ENCODE measurements at regions of chr2 and their contacts with region 1.

Region 1: DNA sequence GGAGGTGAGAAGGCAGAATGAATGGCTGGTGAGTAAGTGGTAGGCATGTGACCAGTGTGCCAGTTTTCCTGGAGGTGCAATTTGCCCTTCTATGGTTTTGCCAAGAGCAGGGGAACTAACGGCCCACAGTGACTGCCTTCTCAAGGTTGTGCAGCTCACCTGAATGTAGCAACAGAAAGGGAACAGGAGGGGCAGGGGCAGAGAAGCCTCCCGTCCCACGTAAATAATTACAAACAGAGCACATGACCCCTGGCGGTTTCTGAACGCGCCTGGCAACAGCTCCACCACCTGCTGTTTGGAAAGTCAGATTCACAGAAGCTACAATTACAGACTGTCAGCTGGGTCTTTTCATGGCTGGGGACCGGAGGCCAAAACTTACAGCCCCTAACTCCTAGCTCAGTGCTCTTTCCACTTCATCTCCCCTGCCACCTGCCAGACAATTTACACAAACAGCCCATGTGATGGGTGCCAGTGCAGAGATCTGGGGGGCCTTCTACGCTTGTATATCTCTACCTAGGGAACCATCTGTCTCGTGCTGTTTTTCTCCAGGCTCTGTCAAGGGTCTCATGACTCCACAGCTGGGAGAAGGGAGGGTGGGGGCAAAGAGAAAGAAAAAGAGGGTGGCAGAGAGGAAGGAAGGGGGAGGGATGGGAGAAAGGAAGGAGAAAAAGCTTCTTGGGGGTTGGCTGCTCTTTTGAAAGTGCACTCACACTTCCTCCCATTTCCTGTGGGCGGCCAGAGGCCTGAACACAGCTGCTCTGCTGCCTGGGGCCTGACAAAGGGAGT is 69.6 kb downstream of the POLR1A start:
- DNase-seq: peak; percentile 86
- ATAC-seq: peak; percentile 83
- H3K4me3 ChIP-seq: no peak overlapping the region
- H3K27ac ChIP-seq: peak overlapping the region; percentile 83
- H3K4me1 ChIP-seq: peaks cover 29% of the 10 kb centered on the region
- H3K27me3 ChIP-seq: no peaks in the 10 kb centered on the region
- CTCF ChIP-seq: peak; percentile 36
- POLR2A ChIP-seq: no peak
- RAD21 ChIP-seq: peak; percentile 45

Region 2: GRCh38 chr2:85826990-85827878 is 208.8 kb before region 1 on chr2:
- CTCF ChIA-PET with region 1: interaction called, 4 read pairs
- POLR2A ChIA-PET with region 1: interaction called, 10 read pairs
- dilution Hi-C with region 1: no loop called
- in situ Hi-C with region 1: no loop called
- intact Hi-C with region 1: loop called (anchors 2 kb)
- DNase-seq: peak; percentile 49
- ATAC-seq: peak; percentile 100
- H3K4me3 ChIP-seq: no peak overlapping the region
- H3K27ac ChIP-seq: no peak overlapping the region
- H3K4me1 ChIP-seq: no peaks in the 10 kb centered on the region
- H3K27me3 ChIP-seq: peaks cover 9% of the 10 kb centered on the region
- CTCF ChIP-seq: peak; percentile 92
- POLR2A ChIP-seq: 0 out of 2 replicates have a peak, but pooled peaks have one; percentile 36
- RAD21 ChIP-seq: peak; percentile 94

Region 3: GRCh38 chr2:85924522-85924921 is 111.6 kb before region 1 on chr2:
- CTCF ChIA-PET with region 1: no interaction called
- POLR2A ChIA-PET with region 1: no interaction called
- dilution Hi-C with region 1: no loop called
- in situ Hi-C with region 1: no loop called
- intact Hi-C with region 1: loop called (anchors 5 kb)
- DNase-seq: peak; percentile 51
- ATAC-seq: no peak
- H3K4me3 ChIP-seq: no peak overlapping the region
- H3K27ac ChIP-seq: peak overlapping the region; percentile 38; the same call in 1 of the 2 replicates
- H3K4me1 ChIP-seq: peaks cover 21% of the 10 kb centered on the region
- H3K27me3 ChIP-seq: no peaks in the 10 kb centered on the region
- CTCF ChIP-seq: no peak
- POLR2A ChIP-seq: no peak
- RAD21 ChIP-seq: no peak

Region 4: DNA sequence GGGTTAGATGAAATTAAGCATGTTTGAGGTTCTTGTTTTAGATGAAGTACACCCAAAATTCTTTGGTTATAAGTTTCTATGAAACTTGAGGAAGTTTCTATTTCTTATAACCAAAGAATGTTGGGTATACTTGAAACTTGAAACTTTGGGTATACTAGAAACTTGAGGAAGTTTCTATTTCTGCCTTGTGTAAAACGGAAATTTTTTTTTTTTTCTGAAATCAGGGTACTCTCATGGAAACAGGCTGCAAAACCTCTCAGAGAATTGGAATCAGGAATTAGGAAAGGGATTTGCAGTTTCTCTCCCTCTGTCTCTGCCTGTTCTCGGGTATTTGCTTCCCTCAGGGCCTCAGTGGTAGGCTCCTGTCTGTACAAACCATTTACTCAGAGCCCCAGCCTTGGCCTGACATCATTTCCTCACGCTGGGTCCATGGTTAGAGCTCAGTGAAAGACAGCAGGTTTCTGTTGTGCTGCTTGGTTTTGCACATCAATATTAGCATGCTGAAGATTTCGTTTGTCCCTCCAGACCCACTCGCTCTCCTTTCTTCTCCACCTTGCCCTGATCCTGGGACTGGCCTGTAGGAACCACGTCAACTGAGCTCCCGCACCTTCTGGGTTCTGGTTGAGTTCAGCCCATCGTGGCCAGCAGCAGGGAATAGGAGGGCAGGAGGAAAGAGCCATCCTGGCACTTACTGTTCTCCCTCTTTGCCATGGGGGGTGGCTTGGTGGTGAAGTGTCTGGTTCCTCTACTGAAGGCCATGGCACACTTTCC is 36.8 kb before region 1 on chr2:
- CTCF ChIA-PET with region 1: interaction called, 6 read pairs
- POLR2A ChIA-PET with region 1: no interaction called
- dilution Hi-C with region 1: no loop called
- in situ Hi-C with region 1: no loop called
- intact Hi-C with region 1: loop called (anchors 2 kb)
- DNase-seq: peak; percentile 49
- ATAC-seq: peak; percentile 9
- H3K4me3 ChIP-seq: no peak overlapping the region
- H3K27ac ChIP-seq: peak overlapping the region; percentile 92
- H3K4me1 ChIP-seq: peaks cover 32% of the 10 kb centered on the region
- H3K27me3 ChIP-seq: no peaks in the 10 kb centered on the region
- CTCF ChIP-seq: no peak
- POLR2A ChIP-seq: no peak
- RAD21 ChIP-seq: no peak

Measured in IMR-90 (cell line).